Testis (tissue), 5 donors: ENCODE measurements at regions of chr1 and their contacts with region 1.

Region 1: GRCh38 chr1:20148561-20149475 is 9.7 kb downstream of the PLA2G2F start:
- DNase-seq: no peak
- H3K4me3 ChIP-seq: no peak overlapping the region
- H3K27ac ChIP-seq: no peak overlapping the region
- H3K4me1 ChIP-seq: peaks cover 17% of the 10 kb centered on the region
- H3K27me3 ChIP-seq: no peaks in the 10 kb centered on the region
- CTCF ChIP-seq: no peak
- POLR2A ChIP-seq: no peak

Region 2: DNA sequence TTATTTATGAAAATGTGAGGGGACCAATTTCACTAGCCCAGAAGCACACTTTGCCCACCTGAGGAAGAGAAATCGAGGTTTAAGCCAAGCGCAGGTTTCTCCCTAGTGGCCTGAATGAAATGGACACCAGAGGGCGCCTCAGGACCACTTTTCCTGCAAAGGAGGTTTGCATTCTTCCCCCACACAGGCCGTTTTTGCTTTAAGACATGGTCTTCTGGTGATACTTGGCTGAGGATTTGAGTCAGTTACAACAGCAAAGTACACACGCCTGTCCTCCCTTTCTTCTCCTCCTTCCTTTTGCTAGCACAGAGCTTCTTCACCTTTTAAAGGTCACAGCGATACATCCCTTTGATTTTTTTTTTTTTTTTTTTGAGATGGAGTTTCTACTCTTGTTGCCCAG is 230.8 kb before region 1 on chr1:
- intact Hi-C with region 1: loop called (anchors 10 kb)
- DNase-seq: peak; percentile 93
- H3K4me3 ChIP-seq: no peak overlapping the region
- H3K27ac ChIP-seq: no peak overlapping the region
- H3K4me1 ChIP-seq: peaks cover 24% of the 10 kb centered on the region
- H3K27me3 ChIP-seq: no peaks in the 10 kb centered on the region
- CTCF ChIP-seq: peak; percentile 86 to 88 (median 88)
- POLR2A ChIP-seq: no peak

Region 3: DNA sequence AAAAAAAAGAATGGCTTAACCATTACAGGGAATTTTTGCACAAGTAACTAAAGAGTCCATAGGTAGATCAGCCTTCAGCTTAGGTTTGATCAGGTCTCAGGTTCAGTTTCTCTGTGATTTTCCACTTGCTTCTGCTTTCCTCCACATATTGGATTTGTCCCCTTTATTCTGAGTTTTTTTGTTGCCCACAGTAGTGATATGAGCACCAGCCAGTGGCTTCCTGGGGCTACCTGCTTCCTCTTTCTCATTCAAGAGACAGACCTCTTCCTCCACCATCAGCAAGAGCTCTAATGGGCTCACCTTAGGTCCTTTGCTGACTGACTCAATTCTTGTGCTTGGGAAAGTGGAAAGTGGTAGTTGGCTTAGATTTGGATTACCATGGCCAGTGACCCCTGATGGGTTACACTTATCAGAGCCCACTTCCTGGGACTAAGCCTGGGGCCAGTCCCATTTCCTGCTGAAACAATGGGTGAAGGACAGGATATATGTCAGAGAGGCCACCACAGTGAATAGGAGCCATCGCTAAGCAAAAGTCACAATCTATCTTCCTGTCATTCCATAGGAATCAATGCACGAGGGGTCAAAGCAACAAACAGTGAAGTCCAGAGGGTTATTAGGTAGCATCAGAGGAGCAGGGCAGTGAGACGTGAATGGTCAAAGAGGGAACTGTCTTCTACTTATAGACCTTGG is 212.6 kb before region 1 on chr1:
- intact Hi-C with region 1: no loop called
- DNase-seq: no peak
- H3K4me3 ChIP-seq: no peak overlapping the region
- H3K27ac ChIP-seq: no peak overlapping the region
- H3K4me1 ChIP-seq: no peaks in the 10 kb centered on the region
- H3K27me3 ChIP-seq: no peaks in the 10 kb centered on the region
- CTCF ChIP-seq: no peak
- POLR2A ChIP-seq: no peak

Region 4: GRCh38 chr1:20047096-20047495 is 101.7 kb before region 1 on chr1:
- intact Hi-C with region 1: no loop called
- DNase-seq: no peak
- H3K4me3 ChIP-seq: no peak overlapping the region
- H3K27ac ChIP-seq: peak overlapping the region in 1 of 2 donors; percentile 30
- H3K4me1 ChIP-seq: no peaks in the 10 kb centered on the region
- H3K27me3 ChIP-seq: no peaks in the 10 kb centered on the region
- CTCF ChIP-seq: no peak
- POLR2A ChIP-seq: no peak